BJ (cell line): ENCODE measurements at regions of chrX and their contacts with region 1.

Region 1: GRCh38 chrX:136268051-136269048 is 17.1 kb upstream of the MAP7D3 start:
- DNase-seq: no peak
- H3K4me3 ChIP-seq: no peak overlapping the region
- H3K27me3 ChIP-seq: no peaks in the 10 kb centered on the region
- CTCF ChIP-seq: peak; percentile 69

Region 2: DNA sequence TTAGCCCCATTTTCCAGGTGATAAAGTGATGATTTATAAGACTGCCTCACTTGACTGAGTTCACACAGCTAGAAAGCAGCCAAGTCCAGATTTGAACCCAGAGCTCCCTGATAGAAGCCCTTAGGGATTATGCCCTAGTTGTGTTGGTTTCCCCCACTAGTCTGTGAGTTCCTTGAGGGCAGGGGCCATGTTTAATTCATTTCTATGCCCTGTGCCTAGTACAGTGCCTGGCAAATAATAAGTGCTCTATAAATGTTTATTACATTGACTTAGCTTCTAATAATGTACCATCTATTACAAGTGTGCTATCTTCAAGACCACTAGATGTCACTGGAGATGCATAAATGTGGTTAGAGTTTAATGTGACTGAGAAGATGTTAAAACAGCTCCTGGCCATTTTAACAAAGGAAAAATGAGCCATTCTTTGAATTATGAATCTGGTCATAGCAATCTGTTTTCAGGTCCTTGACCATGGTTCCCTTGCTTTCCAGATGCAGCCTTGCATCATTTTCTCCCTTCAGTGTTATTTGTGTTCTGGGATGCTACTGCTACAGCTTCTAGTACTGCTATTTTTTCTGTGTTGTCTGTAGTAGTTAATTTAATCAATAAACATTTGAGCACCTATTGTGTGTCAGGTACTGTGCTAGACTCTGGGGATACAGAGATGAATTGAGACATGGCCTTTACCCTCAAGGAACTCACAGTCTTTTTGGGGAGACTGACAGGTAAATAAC is 239.9 kb before region 1 on chrX:
- CTCF ChIA-PET with region 1: interaction called, 34 read pairs
- POLR2A ChIA-PET with region 1: no interaction called
- DNase-seq: no peak
- H3K4me3 ChIP-seq: no peak overlapping the region
- H3K27me3 ChIP-seq: no peaks in the 10 kb centered on the region
- CTCF ChIP-seq: peak; percentile 48

Region 3: GRCh38 chrX:136162831-136163570 is 105.3 kb before region 1 on chrX:
- CTCF ChIA-PET with region 1: interaction called, 11 read pairs
- POLR2A ChIA-PET with region 1: no interaction called
- DNase-seq: no peak
- H3K4me3 ChIP-seq: no peak overlapping the region
- H3K27me3 ChIP-seq: no peaks in the 10 kb centered on the region
- CTCF ChIP-seq: peak; percentile 78

Region 4: DNA sequence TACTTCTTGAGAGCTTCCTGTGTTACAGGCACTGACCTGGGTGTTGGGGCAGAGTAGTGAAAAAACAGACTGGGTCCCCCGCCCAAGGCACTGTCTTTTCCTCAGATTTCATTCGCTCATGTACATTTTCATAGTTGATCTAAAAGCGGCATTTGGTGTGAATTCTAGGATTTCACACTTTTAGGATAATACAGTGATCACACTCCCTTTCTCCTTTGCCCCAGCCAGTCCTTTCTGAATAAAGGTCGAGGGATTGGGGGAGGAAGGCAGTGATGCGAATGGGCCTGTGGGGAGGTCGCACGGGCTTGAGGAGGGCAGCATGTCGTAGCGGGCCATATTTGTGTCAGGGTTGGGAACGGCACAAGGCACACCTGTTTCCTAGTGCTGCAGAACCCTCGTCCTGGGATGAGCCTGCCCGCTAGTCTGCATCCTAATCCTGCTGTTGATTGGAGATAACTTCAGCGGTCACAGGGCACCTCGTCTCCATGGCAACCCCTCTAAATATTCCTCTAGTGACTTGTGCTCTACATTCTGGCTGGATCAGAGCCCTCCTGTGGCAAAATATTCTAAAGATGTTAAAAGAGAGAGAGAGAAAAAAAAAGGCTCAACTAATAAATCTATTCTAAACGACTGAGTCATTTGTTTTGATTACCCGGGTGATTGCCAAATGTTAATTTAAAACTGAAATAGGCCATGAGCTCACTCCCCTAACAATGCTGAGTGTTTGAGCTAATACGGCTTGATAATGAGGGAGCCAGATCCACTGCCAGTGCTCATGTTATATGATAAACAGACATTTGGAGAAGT is 99.2 kb before region 1 on chrX:
- CTCF ChIA-PET with region 1: interaction called, 11 read pairs
- POLR2A ChIA-PET with region 1: no interaction called
- DNase-seq: peak; percentile 91
- H3K4me3 ChIP-seq: no peak overlapping the region
- H3K27me3 ChIP-seq: no peaks in the 10 kb centered on the region
- CTCF ChIP-seq: no peak

Region 5: GRCh38 chrX:136203438-136203837 is 64.9 kb before region 1 on chrX:
- CTCF ChIA-PET with region 1: interaction called, 12 read pairs
- POLR2A ChIA-PET with region 1: no interaction called
- DNase-seq: no peak
- H3K4me3 ChIP-seq: no peak overlapping the region
- H3K27me3 ChIP-seq: no peaks in the 10 kb centered on the region
- CTCF ChIP-seq: no peak

Region 6: GRCh38 chrX:136255541-136255940 is 12.8 kb before region 1 on chrX:
- CTCF ChIA-PET with region 1: interaction called, 4 read pairs
- POLR2A ChIA-PET with region 1: interaction called, 10 read pairs
- DNase-seq: no peak
- H3K4me3 ChIP-seq: no peak overlapping the region; the same call in 1 of the 2 replicates
- H3K27me3 ChIP-seq: no peaks in the 10 kb centered on the region
- CTCF ChIP-seq: no peak

Region 7: GRCh38 chrX:136405126-136405525 is 136.8 kb after region 1 on chrX:
- CTCF ChIA-PET with region 1: no interaction called
- POLR2A ChIA-PET with region 1: no interaction called
- DNase-seq: no peak
- H3K4me3 ChIP-seq: no peak overlapping the region
- H3K27me3 ChIP-seq: no peaks in the 10 kb centered on the region; the same call in 1 of the 2 replicates
- CTCF ChIP-seq: no peak